Adrenal gland (tissue), 19 donors: ENCODE measurements at regions of chr18 and their contacts with region 1.

Region 1: DNA sequence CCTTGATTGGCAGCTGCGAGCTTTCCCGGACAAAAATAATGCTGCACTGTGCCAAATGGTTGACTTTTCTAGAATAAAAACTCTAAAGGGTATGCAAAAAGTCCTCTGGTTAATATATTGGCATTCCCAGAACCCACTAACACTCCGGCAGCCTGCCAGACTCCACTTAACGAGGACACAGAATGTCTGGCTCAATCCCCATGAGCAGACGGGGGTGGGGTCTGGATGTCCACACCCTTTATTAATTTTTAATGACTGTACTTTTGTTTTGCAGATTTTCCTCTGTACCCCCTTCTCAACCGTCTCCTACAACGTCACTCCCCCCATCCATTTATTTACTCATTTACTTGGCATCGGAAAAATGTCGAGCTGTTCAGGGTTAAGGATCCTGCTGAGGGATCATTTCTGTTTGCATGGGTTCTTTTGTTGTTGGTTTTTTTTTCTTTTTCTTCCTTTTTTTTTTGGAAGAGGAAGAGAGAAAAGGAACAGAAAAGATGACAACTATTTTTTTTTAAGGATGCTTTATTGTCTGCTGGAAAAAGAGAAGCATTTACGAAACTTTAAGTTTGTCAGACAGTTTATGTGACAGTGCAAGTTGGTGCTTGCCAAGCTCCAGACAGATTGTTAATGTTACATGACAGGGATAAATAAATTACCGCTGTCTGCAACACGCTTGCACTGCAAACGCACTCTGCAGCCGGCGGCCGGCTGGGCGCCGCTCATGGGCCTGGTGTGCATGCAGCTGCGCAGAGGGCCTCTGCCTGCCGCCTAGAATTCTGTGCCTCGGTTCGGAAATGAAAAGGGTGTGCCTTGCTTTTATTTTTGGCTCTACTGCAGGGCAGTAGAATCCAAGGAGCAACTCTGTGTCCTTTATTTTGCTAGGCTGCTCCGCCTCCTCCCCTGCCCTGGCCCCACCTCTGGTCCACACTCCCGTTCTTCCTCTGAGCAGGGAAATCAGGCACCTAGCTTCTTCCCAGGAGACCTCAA is 3.6 kb downstream of the LDLRAD4 start:
- DNase-seq: peak; percentile 69 to 93 (median 80)
- H3K4me3 ChIP-seq: peak overlapping the region in 1 of 4 donors; percentile 27
- H3K27ac ChIP-seq: peak overlapping the region; percentile 25 to 90 (median 35)
- H3K4me1 ChIP-seq: peaks cover 36 to 56% of the 10 kb centered on the region in 2 donors
- H3K27me3 ChIP-seq: no peaks in the 10 kb centered on the region
- CTCF ChIP-seq: no peak
- POLR2A ChIP-seq: peak in 1 of 2 donors; percentile 39

Region 2: GRCh38 chr18:13258921-13259320 is 36.8 kb after region 1 on chr18:
- intact Hi-C with region 1: loop called in 1 of 2 experiments (anchors 5 kb)
- DNase-seq: peak in 2 of 7 donors; percentile 17 to 48
- H3K4me3 ChIP-seq: no peak overlapping the region
- H3K27ac ChIP-seq: peak overlapping the region in 1 of 5 donors; percentile 87
- H3K4me1 ChIP-seq: peaks cover 20 to 45% of the 10 kb centered on the region in 2 donors
- H3K27me3 ChIP-seq: no peaks in the 10 kb centered on the region
- CTCF ChIP-seq: no peak
- POLR2A ChIP-seq: no peak